CD4-positive, alpha-beta T cell (primary cell): ENCODE measurements at regions of chr6 and their contacts with region 1.

Region 1: GRCh38 chr6:4066029-4066755 is 12.7 kb downstream of the FAM217A start:
- DNase-seq: no peak
- ATAC-seq: no peak
- H3K4me3 ChIP-seq: no peak overlapping the region
- H3K4me3 Mint-ChIP-seq: no peak overlapping the region
- H3K27ac ChIP-seq: no peak overlapping the region
- H3K27ac Mint-ChIP-seq: peak overlapping the region; percentile 40
- H3K4me1 ChIP-seq: no peaks in the 10 kb centered on the region
- H3K4me1 Mint-ChIP-seq: no peaks in the 10 kb centered on the region
- H3K27me3 ChIP-seq: no peaks in the 10 kb centered on the region
- H3K27me3 Mint-ChIP-seq: no peaks in the 10 kb centered on the region
- CTCF ChIP-seq: no peak

Region 2: DNA sequence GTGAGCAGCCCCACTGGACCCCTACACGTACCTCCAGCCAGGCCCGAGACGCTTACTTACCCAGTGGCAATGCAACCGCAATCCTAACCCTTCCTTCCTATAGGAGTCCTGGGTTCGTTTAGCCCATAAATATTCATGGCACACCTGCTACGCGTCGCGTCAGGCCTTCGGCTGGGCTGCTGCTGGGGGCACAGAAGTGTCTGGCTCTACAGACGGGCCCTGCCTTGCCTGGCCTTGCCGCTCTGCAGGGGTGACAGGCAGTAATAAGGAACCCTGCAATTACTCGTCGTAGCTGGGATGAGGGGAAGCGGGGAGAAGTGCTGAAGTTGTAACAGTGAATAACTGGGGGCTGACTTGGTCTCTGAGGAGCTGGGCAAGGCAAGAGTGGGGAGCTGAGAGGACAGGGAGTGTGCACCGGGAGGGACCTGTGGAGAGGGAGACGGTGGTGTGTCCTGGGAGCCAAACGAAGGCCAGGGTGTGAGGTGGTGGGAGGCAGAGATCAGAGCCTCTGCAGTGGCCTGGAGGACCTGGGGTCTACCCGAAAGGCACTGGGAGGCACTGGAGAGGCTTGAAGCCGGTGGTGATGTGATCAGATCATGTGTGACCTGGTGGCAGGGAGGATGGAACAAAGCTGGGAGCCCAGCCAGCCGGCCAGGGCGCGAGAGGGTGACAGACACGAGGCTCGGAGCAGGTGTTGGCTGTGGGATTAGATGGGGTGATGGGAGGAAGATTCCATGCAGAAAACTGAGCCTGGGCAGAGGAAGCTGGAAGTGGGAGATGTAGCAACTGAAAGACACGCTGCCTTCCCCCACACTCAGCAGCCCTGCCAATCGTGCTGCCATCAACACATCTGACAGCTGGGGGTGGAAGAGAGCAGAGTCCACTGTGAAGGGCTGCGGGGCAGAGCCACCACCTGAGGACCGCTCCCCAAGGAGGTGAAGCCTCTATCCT is 771.0 kb before region 1 on chr6:
- CTCF ChIA-PET with region 1: no interaction called
- POLR2A ChIA-PET with region 1: no interaction called
- intact Hi-C with region 1: no loop called
- DNase-seq: peak in 1 of 14 experiments; percentile 25
- ATAC-seq: no peak
- H3K4me3 ChIP-seq: no peak overlapping the region
- H3K4me3 Mint-ChIP-seq: no peak overlapping the region
- H3K27ac ChIP-seq: no peak overlapping the region
- H3K27ac Mint-ChIP-seq: no peak overlapping the region
- H3K4me1 ChIP-seq: no peaks in the 10 kb centered on the region
- H3K4me1 Mint-ChIP-seq: no peaks in the 10 kb centered on the region
- H3K27me3 ChIP-seq: no peaks in the 10 kb centered on the region
- H3K27me3 Mint-ChIP-seq: no peaks in the 10 kb centered on the region
- CTCF ChIP-seq: no peak

Region 3: GRCh38 chr6:4114123-4114522 is 47.9 kb after region 1 on chr6:
- CTCF ChIA-PET with region 1: no interaction called
- POLR2A ChIA-PET with region 1: no interaction called
- intact Hi-C with region 1: loop called in 1 of 2 experiments (anchors 5 kb)
- DNase-seq: no peak
- ATAC-seq: no peak
- H3K4me3 ChIP-seq: no peak overlapping the region
- H3K4me3 Mint-ChIP-seq: no peak overlapping the region
- H3K27ac ChIP-seq: no peak overlapping the region
- H3K27ac Mint-ChIP-seq: no peak overlapping the region
- H3K4me1 ChIP-seq: no peaks in the 10 kb centered on the region
- H3K4me1 Mint-ChIP-seq: no peaks in the 10 kb centered on the region
- H3K27me3 ChIP-seq: no peaks in the 10 kb centered on the region
- H3K27me3 Mint-ChIP-seq: no peaks in the 10 kb centered on the region
- CTCF ChIP-seq: no peak